Ovary (tissue), 10 donors: ENCODE measurements at regions of chr4 and their contacts with region 1.

Region 1: DNA sequence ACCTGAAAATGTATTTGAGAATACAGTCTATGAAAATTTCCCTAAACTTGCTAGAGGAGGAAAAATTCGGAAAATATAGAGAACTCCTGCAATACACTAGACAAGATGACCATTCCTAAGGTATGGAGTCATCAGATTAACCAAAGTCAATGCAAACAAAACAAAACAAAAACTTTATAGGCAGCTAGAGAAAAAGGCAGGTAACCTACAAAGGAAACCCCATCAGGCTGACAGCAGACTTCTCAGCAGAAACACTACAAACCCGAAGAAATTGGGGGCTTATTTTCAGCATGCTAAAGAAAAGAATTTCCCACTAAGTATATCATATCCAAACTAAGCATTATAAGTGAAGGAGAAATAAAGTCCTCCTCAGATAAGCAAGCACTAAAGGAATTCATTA is 1136.4 kb downstream of the PCDH7 start:
- DNase-seq: no peak
- H3K4me3 ChIP-seq: no peak overlapping the region
- H3K27ac ChIP-seq: no peak overlapping the region
- H3K4me1 ChIP-seq: no peaks in the 10 kb centered on the region
- H3K27me3 ChIP-seq: no peaks in the 10 kb centered on the region
- CTCF ChIP-seq: no peak
- EP300 ChIP-seq: no peak
- POLR2A ChIP-seq: no peak

Region 2: DNA sequence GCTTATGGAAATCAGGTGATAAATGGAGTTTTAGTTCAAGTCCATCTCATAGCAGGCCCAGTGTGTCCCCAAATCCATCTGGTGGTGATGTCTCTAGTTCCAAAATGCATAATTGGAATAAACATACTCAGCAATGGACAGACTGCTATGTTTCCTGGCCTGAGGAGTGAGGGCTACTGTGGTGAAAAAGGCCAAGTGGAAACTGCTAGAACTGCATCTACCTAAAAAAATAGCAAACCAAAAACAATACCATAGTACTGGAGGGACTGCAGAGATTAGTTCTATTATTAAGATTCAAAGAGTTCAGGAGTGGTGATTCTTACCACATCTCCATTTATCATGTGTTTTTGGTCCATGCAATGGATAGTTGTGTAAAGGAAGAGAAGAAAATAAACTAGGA is 16.3 kb after region 1 on chr4:
- intact Hi-C with region 1: loop called in 1 of 4 experiments (anchors 2 kb)
- DNase-seq: no peak
- H3K4me3 ChIP-seq: no peak overlapping the region
- H3K27ac ChIP-seq: no peak overlapping the region
- H3K4me1 ChIP-seq: no peaks in the 10 kb centered on the region
- H3K27me3 ChIP-seq: no peaks in the 10 kb centered on the region
- CTCF ChIP-seq: no peak
- EP300 ChIP-seq: no peak
- POLR2A ChIP-seq: no peak

Region 3: DNA sequence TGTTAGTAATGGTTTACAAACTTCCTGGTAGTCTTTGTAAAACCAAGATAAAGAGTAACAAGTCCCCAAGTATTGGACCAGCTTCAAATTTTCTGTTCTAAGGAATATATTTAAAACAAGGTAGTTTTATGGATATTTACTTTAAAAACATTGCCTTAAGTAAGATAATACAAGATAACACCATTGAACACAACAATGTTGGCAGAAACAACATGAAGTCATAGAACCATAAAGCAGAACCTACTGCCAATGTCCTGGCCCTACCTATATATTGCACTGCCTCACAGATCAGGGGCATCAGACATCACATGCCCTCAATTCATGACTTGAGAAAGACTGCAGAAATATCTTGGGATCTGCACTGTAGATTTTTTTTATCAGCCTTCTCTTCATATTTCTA is 39.8 kb after region 1 on chr4:
- intact Hi-C with region 1: no loop called
- DNase-seq: no peak
- H3K4me3 ChIP-seq: no peak overlapping the region
- H3K27ac ChIP-seq: no peak overlapping the region
- H3K4me1 ChIP-seq: no peaks in the 10 kb centered on the region
- H3K27me3 ChIP-seq: no peaks in the 10 kb centered on the region
- CTCF ChIP-seq: no peak
- EP300 ChIP-seq: no peak
- POLR2A ChIP-seq: no peak